T-cell (primary cell): ENCODE measurements at regions of chr19 and their contacts with region 1.

Region 1: GRCh38 chr19:33156334-33156733 is 24.4 kb downstream of the WDR88 start:
- DNase-seq: no peak
- ATAC-seq: no peak
- H3K4me3 ChIP-seq: no peak overlapping the region
- H3K4me3 Mint-ChIP-seq: no peak overlapping the region
- H3K27ac ChIP-seq: no peak overlapping the region
- H3K27ac Mint-ChIP-seq: no peak overlapping the region
- H3K4me1 ChIP-seq: peaks cover 9 to 34% of the 10 kb centered on the region in 2 experiments
- H3K4me1 Mint-ChIP-seq: peaks cover 28 to 32% (median 31%) of the 10 kb centered on the region in 3 donors
- H3K27me3 ChIP-seq: no peaks in the 10 kb centered on the region
- H3K27me3 Mint-ChIP-seq: no peaks in the 10 kb centered on the region

Region 2: GRCh38 chr19:32691291-32691951 is 464.9 kb before region 1 on chr19 and contains the start of gene NUDT19:
- CTCF ChIA-PET with region 1: interaction called in 1 of 2 experiments, 10 read pairs
- POLR2A ChIA-PET with region 1: no interaction called
- DNase-seq: peak; percentile 36 to 78 (median 59)
- ATAC-seq: peak; percentile 81 to 88 (median 84)
- H3K4me3 ChIP-seq: peak within 1 kb of the TSS; percentile 79 to 85
- H3K4me3 Mint-ChIP-seq: peak within 1 kb of the TSS; percentile 86 to 97 (median 88)
- H3K27ac ChIP-seq: peak within 1 kb of the TSS; percentile 49
- H3K27ac Mint-ChIP-seq: peak within 1 kb of the TSS; percentile 87 to 90
- H3K4me1 ChIP-seq: peaks cover 12 to 36% of the 10 kb centered on the region in 2 experiments
- H3K4me1 Mint-ChIP-seq: peaks cover 48 to 52% (median 50%) of the 10 kb centered on the region in 3 donors
- H3K27me3 ChIP-seq: no peaks in the 10 kb centered on the region
- H3K27me3 Mint-ChIP-seq: no peaks in the 10 kb centered on the region
- total RNA-seq, gene NUDT19: 9.6 to 14.7 (median 11.5) TPM

Region 3: DNA sequence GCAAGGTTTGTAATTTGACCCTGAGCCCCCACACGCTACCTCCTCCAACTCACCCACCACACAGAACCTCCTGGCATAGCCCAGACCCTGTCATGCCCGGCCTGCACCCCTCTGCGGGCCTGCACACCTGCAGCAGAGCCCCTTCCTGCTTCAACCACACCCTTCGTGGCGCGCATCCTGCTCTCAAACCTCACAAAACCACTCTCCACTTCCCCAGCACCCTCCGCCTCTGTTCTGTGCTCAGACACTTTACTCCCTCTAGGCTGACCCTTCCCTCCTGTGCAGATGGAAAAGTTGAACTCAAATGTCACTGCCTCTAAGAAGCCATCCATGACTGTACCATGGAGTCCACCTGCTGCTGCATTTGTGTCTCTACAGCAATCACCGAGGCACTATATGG is 155.8 kb before region 1 on chr19:
- CTCF ChIA-PET with region 1: no interaction called
- POLR2A ChIA-PET with region 1: no interaction called
- DNase-seq: peak in 22 of 35 experiments; percentile 2 to 47 (median 12)
- ATAC-seq: peak; percentile 66 to 87 (median 79)
- H3K4me3 ChIP-seq: no peak overlapping the region
- H3K4me3 Mint-ChIP-seq: peak overlapping the region in 2 of 3 donors; percentile 1 to 68
- H3K27ac ChIP-seq: no peak overlapping the region
- H3K27ac Mint-ChIP-seq: peak overlapping the region; percentile 70 to 79
- H3K4me1 ChIP-seq: peaks cover 3 to 17% of the 10 kb centered on the region in 2 experiments
- H3K4me1 Mint-ChIP-seq: peaks cover 12 to 28% (median 13%) of the 10 kb centered on the region in 3 donors
- H3K27me3 ChIP-seq: peaks cover 0 to 2% of the 10 kb centered on the region in 2 experiments
- H3K27me3 Mint-ChIP-seq: no peaks in the 10 kb centered on the region

Region 4: DNA sequence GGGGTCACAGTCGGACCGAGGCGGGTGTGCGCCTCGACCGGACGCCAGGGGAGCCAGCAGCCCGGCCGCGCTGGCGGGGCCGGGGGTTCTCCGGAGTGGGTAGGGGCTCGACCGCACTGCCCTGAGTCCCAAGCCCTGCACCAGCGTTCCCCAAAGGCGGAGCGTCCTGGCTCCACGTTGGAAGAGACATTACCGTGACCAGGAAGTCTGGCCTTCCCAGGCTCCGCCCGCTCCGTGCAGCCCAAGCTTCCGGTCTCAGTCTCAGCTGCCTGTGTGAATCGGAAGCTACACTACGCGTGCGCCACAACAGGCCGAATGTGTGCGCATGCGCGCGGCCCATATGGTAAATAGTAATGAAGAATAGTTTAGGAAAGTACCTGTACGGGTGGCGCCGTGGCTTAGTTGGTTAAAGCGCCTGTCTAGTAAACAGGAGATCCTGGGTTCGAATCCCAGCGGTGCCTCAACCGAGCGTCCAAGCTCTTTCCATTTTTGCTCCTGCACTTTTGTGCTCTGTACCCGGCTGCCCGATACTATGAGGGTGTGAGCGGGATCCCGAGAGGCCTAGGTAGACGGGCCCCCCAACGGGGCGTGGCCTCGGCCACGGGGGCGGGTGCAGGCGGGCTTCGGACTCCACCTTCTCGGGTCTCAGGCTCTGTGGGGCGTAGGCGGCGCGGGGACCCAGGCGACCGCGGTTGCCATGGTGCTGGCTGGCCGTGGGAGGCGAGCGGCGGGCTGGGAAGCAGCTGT is 20.5 kb after region 1 on chr19:
- CTCF ChIA-PET with region 1: interaction called in 1 of 2 experiments, 22 read pairs
- POLR2A ChIA-PET with region 1: interaction called, 3 to 10 read pairs
- DNase-seq: peak; percentile 84 to 100 (median 92)
- ATAC-seq: peak; percentile 75 to 78 (median 78)
- H3K4me3 ChIP-seq: peak overlapping the region; percentile 85 to 90
- H3K4me3 Mint-ChIP-seq: peak overlapping the region; percentile 90 to 97 (median 97)
- H3K27ac ChIP-seq: peak overlapping the region; percentile 88
- H3K27ac Mint-ChIP-seq: peak overlapping the region; percentile 96 to 98
- H3K4me1 ChIP-seq: peaks cover 7 to 45% of the 10 kb centered on the region in 2 experiments
- H3K4me1 Mint-ChIP-seq: peaks cover 41 to 50% (median 48%) of the 10 kb centered on the region in 3 donors
- H3K27me3 ChIP-seq: no peaks in the 10 kb centered on the region
- H3K27me3 Mint-ChIP-seq: peaks cover 0 to 2% of the 10 kb centered on the region in 2 donors